ENCODE measurements at regions of chr10 and their contacts with region 1.

Region 1: DNA sequence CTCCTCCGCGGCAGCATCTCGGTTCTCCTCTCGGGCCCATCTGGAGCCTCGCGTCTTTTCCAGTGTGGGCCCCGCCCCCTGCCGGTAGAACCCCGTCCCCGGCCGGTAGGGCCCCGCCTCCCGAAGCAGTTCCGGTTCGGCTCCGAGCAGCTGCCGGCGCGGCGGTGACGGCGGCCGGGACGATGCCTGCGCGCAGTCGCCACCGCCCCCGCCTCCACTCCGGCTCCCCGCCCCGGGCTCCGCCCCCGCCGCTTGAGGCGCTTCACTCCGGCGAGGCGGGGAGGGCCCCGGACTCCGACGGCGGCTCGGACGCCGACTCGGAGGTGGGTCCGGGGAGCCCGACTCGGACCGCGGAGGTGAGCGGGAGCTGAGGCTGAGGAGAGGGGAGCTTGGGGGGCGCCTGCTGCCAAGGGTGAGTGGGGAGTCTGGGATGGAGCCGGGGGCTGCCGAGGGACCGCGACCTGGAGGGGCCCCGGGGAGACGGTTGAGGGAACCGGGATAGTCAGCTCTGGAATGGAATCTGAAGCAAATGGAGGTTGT is at the start of gene SAMD8:
- DNase-seq: peak; percentile 98
- ATAC-seq: peak; percentile 82
- H3K4me3 ChIP-seq: peak within 1 kb of the TSS; percentile 89
- H3K27ac ChIP-seq: peak within 1 kb of the TSS; percentile 85
- H3K4me1 ChIP-seq: peaks cover 51 to 55% of the 10 kb centered on the region in 2 experiments
- H3K27me3 ChIP-seq: no peaks in the 10 kb centered on the region
- CTCF ChIP-seq: peak in 2 of 3 experiments; percentile 18 to 23; a peak in 2 of 6 replicates
- EP300 ChIP-seq: no peak
- POLR2A ChIP-seq: peak; percentile 81
- RAD21 ChIP-seq: no peak
- polyA plus RNA-seq, gene SAMD8: 2.7 to 2.8 TPM

Region 2: DNA sequence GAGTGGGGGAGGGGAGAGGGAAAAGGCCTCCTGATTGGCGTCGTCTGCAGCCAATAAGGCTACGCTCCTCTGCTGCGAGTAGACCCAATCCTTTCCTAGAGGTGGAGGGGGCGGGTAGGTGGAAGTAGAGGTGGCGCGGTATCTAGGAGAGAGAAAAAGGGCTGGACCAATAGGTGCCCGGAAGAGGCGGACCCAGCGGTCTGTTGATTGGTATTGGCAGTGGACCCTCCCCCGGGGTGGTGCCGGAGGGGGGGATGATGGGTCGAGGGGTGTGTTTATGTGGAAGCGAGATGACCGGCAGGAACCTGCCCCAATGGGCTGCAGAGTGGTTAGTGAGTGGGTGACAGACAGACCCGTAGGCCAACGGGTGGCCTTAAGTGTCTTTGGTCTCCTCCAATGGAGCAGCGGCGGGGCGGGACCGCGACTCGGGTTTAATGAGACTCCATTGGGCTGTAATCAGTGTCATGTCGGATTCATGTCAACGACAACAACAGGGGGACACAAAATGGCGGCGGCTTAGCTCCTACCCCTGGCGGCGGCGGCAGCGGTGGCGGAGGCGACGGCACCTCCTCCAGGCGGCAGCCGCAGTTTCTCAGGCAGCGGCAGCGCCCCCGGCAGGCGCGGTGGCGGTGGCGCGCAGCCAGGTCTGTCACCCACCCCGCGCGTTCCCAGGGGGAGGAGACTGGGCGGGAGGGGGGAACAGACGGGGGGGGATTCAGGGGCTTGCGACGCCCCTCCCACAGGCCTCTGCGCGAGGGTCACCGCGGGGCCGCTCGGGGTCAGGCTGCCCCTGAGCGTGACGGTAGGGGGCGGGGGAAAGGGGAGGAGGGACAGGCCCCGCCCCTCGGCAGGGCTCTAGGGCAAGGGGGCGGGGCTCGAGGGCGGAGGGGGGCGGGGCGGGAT is 285.0 kb before region 1 on chr10 and contains the start of gene KAT6B:
- CTCF ChIA-PET with region 1: no interaction called
- POLR2A ChIA-PET with region 1: no interaction called
- in situ Hi-C with region 1: no loop called
- intact Hi-C with region 1: loop called (anchors 5 kb)
- DNase-seq: peak; percentile 97 to 100 (median 98)
- ATAC-seq: peak; percentile 95
- H3K4me3 ChIP-seq: peak within 1 kb of the TSS; percentile 73
- H3K27ac ChIP-seq: peak within 1 kb of the TSS; percentile 90
- H3K4me1 ChIP-seq: peaks cover 33 to 36% of the 10 kb centered on the region in 2 experiments
- H3K27me3 ChIP-seq: no peaks in the 10 kb centered on the region
- CTCF ChIP-seq: peak; percentile 44 to 94 (median 50); a peak in 5 of 6 replicates
- EP300 ChIP-seq: 0 out of 2 replicates have a peak, but pooled peaks have one; percentile 7
- POLR2A ChIP-seq: peak; percentile 87
- RAD21 ChIP-seq: peak in 1 of 2 experiments; percentile 20; a peak in 1 of 4 replicates
- polyA plus RNA-seq, gene KAT6B: 1.4 to 2.4 TPM

Region 3: DNA sequence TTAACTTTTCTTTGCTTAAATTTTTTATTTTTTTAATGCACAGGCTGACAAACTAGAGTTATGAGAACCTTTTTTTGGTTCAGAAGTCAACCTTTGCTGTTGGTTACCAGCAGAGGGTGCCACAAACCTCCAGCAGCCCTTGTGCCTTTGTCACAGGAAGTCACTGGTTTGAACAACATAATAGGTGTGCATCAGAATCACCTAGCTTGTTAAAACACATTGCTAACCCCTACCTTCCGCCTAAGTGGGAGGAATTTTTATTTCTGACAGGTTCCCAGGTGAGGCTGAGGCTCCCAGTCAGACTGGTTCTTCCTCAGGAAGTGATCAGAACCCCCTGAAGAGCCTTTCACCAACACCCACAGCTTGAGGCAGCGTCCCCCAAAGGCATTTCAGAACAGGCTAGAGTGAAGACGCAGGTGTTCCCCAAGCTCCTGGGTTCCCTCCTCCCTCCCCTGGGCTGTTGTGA is 76.6 kb after region 1 on chr10:
- CTCF ChIA-PET with region 1: no interaction called
- POLR2A ChIA-PET with region 1: interaction called, 3 read pairs
- in situ Hi-C with region 1: no loop called
- intact Hi-C with region 1: loop called (anchors 5 kb)
- DNase-seq: peak; percentile 46 to 85 (median 63)
- ATAC-seq: peak; percentile 79
- H3K4me3 ChIP-seq: no peak overlapping the region
- H3K27ac ChIP-seq: no peak overlapping the region
- H3K4me1 ChIP-seq: peaks cover 6 to 23% of the 10 kb centered on the region in 2 experiments; a peak in 4 of 5 replicates
- H3K27me3 ChIP-seq: no peaks in the 10 kb centered on the region
- CTCF ChIP-seq: peak; percentile 86 to 97 (median 92)
- EP300 ChIP-seq: no peak; the same call in 1 of the 2 replicates
- POLR2A ChIP-seq: no peak
- RAD21 ChIP-seq: peak; percentile 85 to 90

Region 4: DNA sequence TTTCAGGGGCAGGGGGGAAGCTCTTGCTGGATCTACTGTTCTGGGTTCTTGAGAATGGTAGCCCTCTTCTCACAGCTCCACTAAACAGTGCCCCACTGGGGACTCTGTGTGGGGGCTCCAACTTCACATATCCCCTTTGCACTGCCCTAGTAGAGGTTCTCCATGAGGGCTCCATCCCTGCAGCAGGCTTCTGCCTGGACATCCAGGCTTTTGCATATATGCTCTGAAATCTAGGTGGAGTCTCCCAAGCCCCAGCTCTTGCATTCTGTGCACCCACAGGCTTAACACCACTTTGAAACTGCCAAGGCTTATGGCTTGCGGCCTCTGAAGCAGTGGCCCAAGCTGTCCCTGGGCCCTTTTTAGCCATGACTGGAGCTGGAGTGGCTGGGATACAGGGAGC is 470.7 kb after region 1 on chr10:
- CTCF ChIA-PET with region 1: no interaction called
- POLR2A ChIA-PET with region 1: no interaction called
- in situ Hi-C with region 1: no loop called
- intact Hi-C with region 1: no loop called
- DNase-seq: peak in 1 of 4 experiments; percentile 4
- ATAC-seq: no peak
- H3K4me3 ChIP-seq: no peak overlapping the region
- H3K27ac ChIP-seq: no peak overlapping the region
- H3K4me1 ChIP-seq: no peaks in the 10 kb centered on the region
- H3K27me3 ChIP-seq: no peaks in the 10 kb centered on the region
- CTCF ChIP-seq: no peak
- EP300 ChIP-seq: no peak
- POLR2A ChIP-seq: no peak
- RAD21 ChIP-seq: no peak